Prostate gland (tissue), 2 donors: ENCODE measurements at regions of chr17 and their contacts with region 1.

Region 1: DNA sequence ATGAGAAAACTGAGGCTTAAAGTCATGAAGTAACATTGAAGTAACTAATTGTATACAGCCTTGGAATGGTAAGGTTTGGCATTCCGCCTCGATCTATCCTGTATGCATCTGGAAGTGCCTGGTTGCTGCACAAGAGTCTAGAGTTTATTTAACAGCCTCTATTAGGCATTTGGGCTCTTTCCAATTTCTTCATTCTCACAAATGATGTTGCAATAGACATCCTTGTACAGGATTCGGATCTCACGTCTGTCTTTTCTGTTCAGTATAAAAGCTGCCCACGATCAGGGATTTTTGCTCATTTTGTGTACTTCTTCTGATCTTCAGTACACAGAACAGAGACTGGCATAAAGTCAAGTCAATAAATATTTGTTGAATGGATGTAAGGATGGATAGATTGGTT is 100.5 kb downstream of the AIPL1 start:
- DNase-seq: no peak
- H3K4me3 ChIP-seq: no peak overlapping the region
- H3K27ac ChIP-seq: no peak overlapping the region
- H3K4me1 ChIP-seq: no peaks in the 10 kb centered on the region
- H3K27me3 ChIP-seq: no peaks in the 10 kb centered on the region
- CTCF ChIP-seq: no peak
- POLR2A ChIP-seq: no peak

Region 2: DNA sequence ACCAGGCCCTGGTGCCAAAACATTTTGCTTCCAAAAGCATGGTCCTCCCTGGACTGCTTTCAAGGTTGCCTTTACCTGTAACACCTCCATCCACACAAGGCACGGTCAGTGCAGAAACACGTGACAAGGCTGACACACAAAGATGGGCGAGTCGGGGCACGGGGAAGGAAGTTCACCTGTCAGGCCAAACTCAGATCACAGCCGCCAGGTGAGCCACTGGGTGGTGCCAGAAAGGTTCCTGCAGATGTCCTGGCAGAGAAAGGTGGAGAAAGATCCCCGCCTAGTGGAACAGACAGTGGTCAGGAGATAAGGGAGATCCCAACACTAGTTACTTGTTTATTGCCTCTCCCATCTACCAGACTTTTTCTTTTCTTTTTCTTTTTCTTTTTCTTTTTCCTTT is 54.7 kb before region 1 on chr17:
- intact Hi-C with region 1: loop called (anchors 10 kb)
- DNase-seq: peak; percentile 33
- H3K4me3 ChIP-seq: no peak overlapping the region
- H3K27ac ChIP-seq: no peak overlapping the region
- H3K4me1 ChIP-seq: no peaks in the 10 kb centered on the region
- H3K27me3 ChIP-seq: no peaks in the 10 kb centered on the region
- CTCF ChIP-seq: peak in 3 of 4 experiments; percentile 25 to 53 (median 38)
- POLR2A ChIP-seq: no peak

Region 3: GRCh38 chr17:6443692-6444569 is 109.5 kb after region 1 on chr17 and contains the start of gene PIMREG:
- intact Hi-C with region 1: no loop called
- DNase-seq: peak; percentile 92
- H3K4me3 ChIP-seq: peak within 1 kb of the TSS; percentile 43 to 46
- H3K27ac ChIP-seq: peak within 1 kb of the TSS in 1 of 2 donors; percentile 45
- H3K4me1 ChIP-seq: no peaks in the 10 kb centered on the region
- H3K27me3 ChIP-seq: no peaks in the 10 kb centered on the region
- CTCF ChIP-seq: no peak
- POLR2A ChIP-seq: no peak
- total RNA-seq, gene PIMREG: 0.45 to 4.9 TPM